ENCODE measurements at regions of chr2 and their contacts with region 1.

Region 1: DNA sequence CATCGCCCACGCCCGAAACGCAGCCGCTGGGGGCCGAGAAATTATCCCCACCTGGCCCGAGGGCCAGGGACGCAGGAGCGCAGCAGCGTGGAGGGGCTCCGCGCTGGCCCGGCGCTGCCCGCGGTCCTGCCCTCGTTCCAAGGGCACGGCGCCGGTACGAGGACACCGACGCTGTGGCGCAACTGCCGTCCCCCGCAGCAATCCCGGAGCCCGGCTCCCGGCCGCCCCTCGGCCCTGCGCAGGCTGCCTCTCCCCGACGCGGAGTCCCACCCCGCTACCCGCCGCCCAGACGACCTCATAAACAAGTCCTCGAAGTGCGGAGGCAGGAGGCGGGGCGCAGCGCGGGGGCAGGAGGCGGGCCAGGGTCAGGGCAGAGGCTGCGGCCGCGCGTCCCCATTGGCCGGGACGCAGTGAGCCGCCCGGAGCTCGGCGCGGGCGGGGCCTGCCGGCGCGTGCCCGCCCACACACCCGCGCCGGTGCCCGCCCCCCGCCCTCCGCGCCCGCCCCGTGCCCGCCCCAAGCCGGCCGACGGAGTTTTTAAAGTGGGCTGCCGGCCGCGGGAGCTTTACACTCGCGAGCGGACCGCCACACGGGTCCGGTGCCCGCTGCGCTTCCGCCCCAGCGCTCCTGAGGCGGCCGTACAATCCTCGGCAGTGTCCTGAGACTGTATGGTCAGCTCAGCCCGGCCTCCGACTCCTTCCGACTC is at the start of gene EPAS1:
- DNase-seq: peak; percentile 91 to 92
- H3K4me3 ChIP-seq: peak within 1 kb of the TSS; percentile 90
- H3K4me3 Mint-ChIP-seq: peak within 1 kb of the TSS; percentile 83
- H3K27ac Mint-ChIP-seq: peak within 1 kb of the TSS; percentile 57
- H3K4me1 ChIP-seq: peaks cover 16% of the 10 kb centered on the region
- H3K4me1 Mint-ChIP-seq: peaks cover 17% of the 10 kb centered on the region
- H3K27me3 ChIP-seq: no peaks in the 10 kb centered on the region
- H3K27me3 Mint-ChIP-seq: peaks cover 2% of the 10 kb centered on the region
- CTCF ChIP-seq: no peak
- total RNA-seq, gene EPAS1: 68.1 and 77.3 TPM in 2 replicates

Region 2: GRCh38 chr2:46002507-46002883 is 294.5 kb before region 1 on chr2:
- CTCF ChIA-PET with region 1: no interaction called
- POLR2A ChIA-PET with region 1: no interaction called
- intact Hi-C with region 1: loop called (anchors 2 kb)
- DNase-seq: peak; percentile 71 to 72
- H3K4me3 ChIP-seq: no peak overlapping the region
- H3K4me3 Mint-ChIP-seq: no peak overlapping the region
- H3K27ac Mint-ChIP-seq: peak overlapping the region; percentile 67
- H3K4me1 ChIP-seq: peaks cover 41% of the 10 kb centered on the region
- H3K4me1 Mint-ChIP-seq: peaks cover 53% of the 10 kb centered on the region
- H3K27me3 ChIP-seq: no peaks in the 10 kb centered on the region
- H3K27me3 Mint-ChIP-seq: no peaks in the 10 kb centered on the region
- CTCF ChIP-seq: no peak

Region 3: GRCh38 chr2:46171411-46171953 is 125.5 kb before region 1 on chr2:
- CTCF ChIA-PET with region 1: interaction called, 5 read pairs
- POLR2A ChIA-PET with region 1: no interaction called
- intact Hi-C with region 1: loop called (anchors 2 kb)
- DNase-seq: no peak
- H3K4me3 ChIP-seq: no peak overlapping the region
- H3K4me3 Mint-ChIP-seq: no peak overlapping the region
- H3K27ac Mint-ChIP-seq: no peak overlapping the region
- H3K4me1 ChIP-seq: peaks cover 79% of the 10 kb centered on the region
- H3K4me1 Mint-ChIP-seq: peaks cover 56% of the 10 kb centered on the region
- H3K27me3 ChIP-seq: no peaks in the 10 kb centered on the region
- H3K27me3 Mint-ChIP-seq: no peaks in the 10 kb centered on the region
- CTCF ChIP-seq: no peak

Region 4: DNA sequence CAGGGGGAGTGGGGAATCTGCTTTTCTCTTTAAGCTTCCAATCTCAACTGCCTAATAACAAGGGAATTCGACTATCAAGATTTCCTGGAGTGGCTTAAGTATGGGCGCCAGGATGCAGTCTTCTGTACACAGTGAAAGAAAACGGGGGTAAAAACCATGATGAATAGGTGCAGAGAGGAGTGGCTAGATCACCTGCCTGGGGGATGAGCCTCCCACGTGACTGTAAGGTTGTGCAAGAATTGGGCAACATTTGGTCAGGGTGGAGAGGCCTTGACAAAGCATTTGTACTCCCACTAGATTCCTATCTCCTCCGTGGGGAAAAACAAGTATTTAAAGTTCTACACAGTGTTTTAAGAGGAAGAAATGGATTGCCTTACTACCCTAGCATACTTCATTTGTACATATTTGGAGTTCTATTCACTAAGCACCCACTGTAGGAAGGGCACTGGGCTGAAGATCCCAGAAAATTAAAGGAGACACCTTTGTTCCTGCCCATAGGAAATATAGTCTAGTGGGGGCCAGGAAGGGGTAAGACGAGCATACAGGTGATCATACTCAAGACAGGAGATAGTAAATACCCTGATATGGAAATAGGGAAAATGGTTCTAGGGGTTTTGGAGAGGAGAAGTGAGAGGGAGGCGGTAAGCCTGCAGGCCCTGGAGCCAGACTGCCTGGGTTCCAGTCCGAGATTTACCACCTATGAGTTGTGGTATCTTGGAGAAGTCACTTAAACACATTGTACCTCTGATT is 29.4 kb after region 1 on chr2:
- CTCF ChIA-PET with region 1: interaction called, 4 read pairs
- POLR2A ChIA-PET with region 1: no interaction called
- intact Hi-C with region 1: loop called (anchors 1 kb)
- DNase-seq: peak; percentile 81 to 83
- H3K4me3 ChIP-seq: no peak overlapping the region
- H3K4me3 Mint-ChIP-seq: peak overlapping the region; percentile 23
- H3K27ac Mint-ChIP-seq: peak overlapping the region; percentile 89
- H3K4me1 ChIP-seq: peaks cover 47% of the 10 kb centered on the region
- H3K4me1 Mint-ChIP-seq: peaks cover 51% of the 10 kb centered on the region
- H3K27me3 ChIP-seq: no peaks in the 10 kb centered on the region
- H3K27me3 Mint-ChIP-seq: no peaks in the 10 kb centered on the region
- CTCF ChIP-seq: no peak

Region 5: GRCh38 chr2:46364797-46365457 is 67.9 kb after region 1 on chr2:
- CTCF ChIA-PET with region 1: interaction called, 5 read pairs
- POLR2A ChIA-PET with region 1: no interaction called
- intact Hi-C with region 1: loop called (anchors 1 kb)
- DNase-seq: peak in 1 of 2 experiments; percentile 68
- H3K4me3 ChIP-seq: no peak overlapping the region
- H3K4me3 Mint-ChIP-seq: no peak overlapping the region
- H3K27ac Mint-ChIP-seq: no peak overlapping the region
- H3K4me1 ChIP-seq: no peaks in the 10 kb centered on the region
- H3K4me1 Mint-ChIP-seq: no peaks in the 10 kb centered on the region
- H3K27me3 ChIP-seq: no peaks in the 10 kb centered on the region
- H3K27me3 Mint-ChIP-seq: no peaks in the 10 kb centered on the region
- CTCF ChIP-seq: peak; percentile 67 to 75

Region 6: GRCh38 chr2:46461011-46461674 is 164.2 kb after region 1 on chr2:
- CTCF ChIA-PET with region 1: no interaction called
- POLR2A ChIA-PET with region 1: no interaction called
- intact Hi-C with region 1: loop called (anchors 2 kb)
- DNase-seq: peak; percentile 63 to 88
- H3K4me3 ChIP-seq: no peak overlapping the region
- H3K4me3 Mint-ChIP-seq: no peak overlapping the region
- H3K27ac Mint-ChIP-seq: peak overlapping the region; percentile 12
- H3K4me1 ChIP-seq: no peaks in the 10 kb centered on the region
- H3K4me1 Mint-ChIP-seq: peaks cover 5% of the 10 kb centered on the region
- H3K27me3 ChIP-seq: no peaks in the 10 kb centered on the region
- H3K27me3 Mint-ChIP-seq: no peaks in the 10 kb centered on the region
- CTCF ChIP-seq: peak; percentile 97 to 98

Measured in Caco-2 (cell line).